Mammary epithelial cell (primary cell): ENCODE measurements at regions of chr14 and their contacts with region 1.

Region 1: GRCh38 chr14:43894534-43894933 is 612.5 kb downstream of the FSCB start:
- DNase-seq: no peak
- H3K4me3 ChIP-seq: no peak overlapping the region
- H3K27ac ChIP-seq: no peak overlapping the region
- H3K4me1 ChIP-seq: no peaks in the 10 kb centered on the region
- H3K27me3 ChIP-seq: no peaks in the 10 kb centered on the region
- CTCF ChIP-seq: peak; percentile 16 to 29

Region 2: DNA sequence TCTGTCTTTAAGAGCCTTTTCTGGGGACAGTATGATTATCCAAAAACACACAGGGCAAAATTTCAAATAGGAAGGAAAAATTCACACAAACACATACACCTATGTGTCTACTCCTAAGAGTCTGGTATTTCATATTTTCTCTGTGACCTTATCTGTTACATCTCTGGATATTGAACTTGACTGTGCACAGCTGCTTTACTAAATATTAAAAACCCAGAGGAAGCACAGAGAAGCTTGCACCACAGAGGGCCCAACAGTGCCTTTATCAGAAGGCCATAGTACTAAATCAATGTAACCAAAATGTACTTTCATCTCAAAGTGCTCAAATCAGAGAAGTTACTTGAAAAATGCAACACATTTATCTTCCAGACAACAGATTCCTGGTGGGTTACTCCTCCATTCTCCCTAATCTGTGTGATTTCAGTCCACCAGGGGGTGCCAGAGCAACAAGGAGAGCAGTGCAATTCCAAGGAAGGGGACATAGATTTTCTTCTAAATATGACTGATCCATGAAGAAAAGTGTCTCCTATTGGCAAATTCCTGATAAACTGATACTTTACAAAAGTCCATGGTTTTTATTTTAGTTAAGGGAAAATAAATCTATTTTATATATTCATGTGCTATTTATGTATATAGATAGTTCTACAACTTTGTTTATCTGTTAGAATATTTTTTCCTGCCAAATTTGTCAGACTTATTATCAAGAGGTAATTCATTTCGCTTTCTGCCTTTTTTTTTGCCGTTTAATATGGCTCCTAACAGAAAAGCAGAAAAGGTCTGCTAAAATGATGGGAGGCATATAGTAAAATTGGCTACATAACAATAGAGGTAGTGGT is 1670.3 kb before region 1 on chr14:
- CTCF ChIA-PET with region 1: no interaction called
- dilution Hi-C with region 1: no loop called
- in situ Hi-C with region 1: no loop called
- intact Hi-C with region 1: loop called (anchors 5 kb)
- DNase-seq: peak; percentile 35
- H3K4me3 ChIP-seq: no peak overlapping the region
- H3K27ac ChIP-seq: no peak overlapping the region
- H3K4me1 ChIP-seq: peaks cover 8% of the 10 kb centered on the region
- H3K27me3 ChIP-seq: no peaks in the 10 kb centered on the region
- CTCF ChIP-seq: peak; percentile 79 to 83

Region 3: GRCh38 chr14:43610949-43611348 is 283.6 kb before region 1 on chr14:
- CTCF ChIA-PET with region 1: no interaction called
- dilution Hi-C with region 1: no loop called
- in situ Hi-C with region 1: no loop called
- intact Hi-C with region 1: loop called (anchors 2 kb)
- DNase-seq: no peak
- H3K4me3 ChIP-seq: no peak overlapping the region
- H3K27ac ChIP-seq: no peak overlapping the region
- H3K4me1 ChIP-seq: no peaks in the 10 kb centered on the region
- H3K27me3 ChIP-seq: no peaks in the 10 kb centered on the region
- CTCF ChIP-seq: peak in 1 of 2 donors; percentile 25

Region 4: DNA sequence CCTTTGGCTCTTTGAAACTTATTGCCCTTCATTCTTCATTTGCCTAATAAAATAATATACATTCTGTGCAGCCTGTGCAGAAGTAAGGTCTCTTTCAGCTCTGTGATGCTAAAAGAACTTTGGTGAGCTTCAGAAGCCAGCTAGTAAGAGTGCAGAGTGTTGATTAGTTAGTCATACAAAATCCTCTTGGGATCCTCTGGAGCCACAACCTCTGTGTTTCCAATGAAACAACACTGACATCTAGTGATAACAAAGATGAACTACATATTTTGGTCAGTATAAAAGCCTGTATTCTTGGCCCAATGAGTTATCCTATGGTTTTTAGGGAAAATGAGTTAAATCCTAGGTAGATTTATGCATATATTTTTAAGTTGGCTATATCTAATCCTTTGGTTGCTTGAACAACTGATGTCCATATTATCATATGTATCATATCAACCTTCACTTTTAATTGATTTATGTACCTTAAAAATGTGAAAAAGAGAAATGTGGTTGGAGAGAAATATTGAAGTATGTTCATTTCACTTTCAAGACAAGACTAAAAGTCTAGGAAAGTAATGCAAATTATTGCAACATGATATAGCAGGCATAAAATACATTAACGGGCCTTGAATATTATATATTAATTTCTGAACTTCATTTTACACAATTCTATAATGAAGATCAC is 908.8 kb after region 1 on chr14:
- CTCF ChIA-PET with region 1: no interaction called
- dilution Hi-C with region 1: no loop called
- in situ Hi-C with region 1: no loop called
- intact Hi-C with region 1: loop called (anchors 10 kb)
- DNase-seq: peak; percentile 46
- H3K4me3 ChIP-seq: no peak overlapping the region
- H3K27ac ChIP-seq: no peak overlapping the region
- H3K4me1 ChIP-seq: no peaks in the 10 kb centered on the region
- H3K27me3 ChIP-seq: no peaks in the 10 kb centered on the region
- CTCF ChIP-seq: peak; percentile 45 to 71